Dorsolateral prefrontal cortex (tissue), 120 donors: ENCODE measurements at regions of chr11 and their contacts with region 1.

Region 1: GRCh38 chr11:109422870-109423465 is 978 bp downstream of the C11orf87 start:
- DNase-seq: peak in 8 of 10 donors; percentile 22 to 54 (median 42)
- H3K4me3 ChIP-seq: peak overlapping the region; percentile 21 to 74 (median 60)
- H3K27ac ChIP-seq: peak overlapping the region in 57 of 59 donors; percentile 15 to 90 (median 80)
- H3K27me3 ChIP-seq: peaks cover 0 to 34% (median 8%) of the 10 kb centered on the region in 45 donors
- CTCF ChIP-seq: no peak

Region 2: GRCh38 chr11:108985945-108986279 is 437.1 kb before region 1 on chr11:
- intact Hi-C with region 1: loop called in 1 of 2 experiments (anchors 10 kb)
- DNase-seq: no peak
- H3K4me3 ChIP-seq: no peak overlapping the region
- H3K27ac ChIP-seq: peak overlapping the region in 49 of 59 donors; percentile 11 to 91 (median 75)
- H3K27me3 ChIP-seq: no peaks in the 10 kb centered on the region
- CTCF ChIP-seq: no peak